ENCODE measurements at regions of chr19 and their contacts with region 1.

Region 1: GRCh38 chr19:35995048-35995993 is at the start of gene SDHAF1:
- DNase-seq: peak; percentile 91
- H3K4me3 Mint-ChIP-seq: peak within 1 kb of the TSS; percentile 93
- H3K27ac Mint-ChIP-seq: peak within 1 kb of the TSS; percentile 89
- H3K4me1 Mint-ChIP-seq: peaks cover 20% of the 10 kb centered on the region
- H3K27me3 Mint-ChIP-seq: no peaks in the 10 kb centered on the region
- total RNA-seq, gene SDHAF1: 20.0 and 20.8 TPM in 2 replicates

Region 2: DNA sequence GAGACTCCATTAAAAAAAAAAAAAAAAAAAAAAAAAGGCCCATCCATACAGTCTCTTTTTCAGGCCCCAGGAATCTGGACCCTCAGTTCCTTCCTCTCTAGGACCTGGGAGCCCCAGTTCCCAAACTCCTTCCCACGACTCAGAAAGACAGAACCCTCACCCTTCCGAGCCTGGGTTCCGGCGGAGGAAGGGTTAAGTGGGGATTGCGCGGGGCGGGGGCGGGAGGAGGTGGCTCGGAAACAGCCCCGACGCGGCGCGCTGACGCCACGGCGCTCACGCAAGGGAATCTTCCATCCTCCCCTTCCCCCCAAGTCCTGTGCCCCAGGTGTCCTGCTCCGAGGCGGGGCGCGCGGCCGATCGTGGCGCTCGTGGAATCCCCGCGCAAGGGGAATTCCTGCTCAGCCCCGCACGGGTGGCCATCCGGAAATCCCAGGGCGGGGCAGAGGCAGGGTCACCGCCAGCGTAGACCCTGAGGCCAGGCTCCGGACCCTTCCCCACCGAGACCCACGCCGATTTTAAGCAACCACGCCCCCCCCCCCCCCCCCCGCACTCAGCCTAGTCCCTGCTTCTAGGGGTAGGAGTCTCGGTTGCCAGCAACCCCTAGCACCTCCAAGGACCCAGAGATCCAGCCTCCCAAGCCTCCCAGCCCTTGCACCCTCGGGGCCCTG is 95.6 kb before region 1 on chr19:
- intact Hi-C with region 1: loop called (anchors 5 kb)
- DNase-seq: peak; percentile 82
- H3K4me3 Mint-ChIP-seq: peak overlapping the region; percentile 92
- H3K27ac Mint-ChIP-seq: peak overlapping the region; percentile 96
- H3K4me1 Mint-ChIP-seq: peaks cover 43% of the 10 kb centered on the region
- H3K27me3 Mint-ChIP-seq: no peaks in the 10 kb centered on the region

Region 3: DNA sequence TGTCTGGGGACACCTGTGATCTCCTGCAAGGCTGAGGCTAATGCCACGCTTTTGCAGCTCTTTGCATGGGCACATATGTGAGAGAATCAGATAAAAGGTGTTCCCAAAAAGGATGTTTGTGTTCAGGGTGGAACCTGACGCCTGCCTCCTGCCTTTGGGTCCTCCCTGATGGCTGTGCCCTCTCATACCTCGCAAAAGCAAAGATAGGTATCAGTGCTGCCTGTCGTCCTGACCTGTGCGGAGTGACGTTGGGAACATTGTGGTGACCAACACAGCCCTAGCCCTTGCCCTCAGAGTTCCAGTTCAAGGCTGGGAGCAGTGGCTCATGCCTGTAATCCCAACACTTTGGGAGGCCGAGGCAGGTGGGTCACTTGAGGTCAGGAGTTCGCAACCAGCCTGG is 45.2 kb before region 1 on chr19:
- intact Hi-C with region 1: loop called (anchors 5 kb)
- DNase-seq: no peak
- H3K4me3 Mint-ChIP-seq: no peak overlapping the region
- H3K27ac Mint-ChIP-seq: no peak overlapping the region
- H3K4me1 Mint-ChIP-seq: peaks cover 27% of the 10 kb centered on the region
- H3K27me3 Mint-ChIP-seq: no peaks in the 10 kb centered on the region

Region 4: DNA sequence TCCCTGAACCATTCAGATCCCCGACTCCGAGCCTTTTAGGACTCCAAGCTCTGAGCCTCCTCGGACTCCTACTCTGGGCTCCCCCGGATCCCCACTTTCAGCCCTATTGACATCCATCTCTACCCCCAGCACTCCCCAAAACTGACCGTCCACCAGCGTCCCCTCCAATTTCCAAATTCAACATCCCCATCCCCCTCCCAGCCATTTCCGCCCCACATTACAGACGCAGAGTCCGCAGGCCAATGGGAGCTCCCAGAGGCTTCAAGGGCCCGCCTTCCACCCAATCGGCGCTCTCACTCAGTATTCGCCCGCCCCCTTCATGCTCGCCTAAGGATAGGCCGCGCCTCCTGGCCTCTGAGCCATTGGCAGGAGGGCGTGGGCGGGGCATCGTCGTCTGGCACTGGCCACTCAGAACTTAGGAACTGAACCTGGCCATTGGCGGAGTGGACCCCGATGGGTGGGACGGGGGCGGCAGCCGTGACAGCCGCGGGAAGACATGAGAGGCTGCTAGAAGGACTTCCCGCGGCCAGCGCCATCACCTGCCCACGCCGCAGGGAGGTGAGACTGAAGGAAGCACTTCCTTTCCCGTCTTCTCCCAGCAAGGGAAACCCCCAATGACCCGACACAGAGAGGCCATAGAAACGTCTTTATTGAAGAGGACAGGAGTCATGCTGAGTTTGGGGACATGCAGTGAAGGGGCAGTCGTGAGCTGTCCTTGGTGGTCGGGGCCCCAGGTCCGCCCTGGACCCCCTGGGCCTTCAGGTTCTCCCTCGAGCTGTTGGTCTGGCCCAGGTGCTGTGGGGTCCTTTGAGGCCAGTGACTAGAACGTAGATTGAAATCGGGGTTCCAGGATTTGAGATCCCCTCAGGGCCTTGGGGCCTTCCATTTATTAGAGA is 19.0 kb after region 1 on chr19 and contains the start of gene ALKBH6:
- intact Hi-C with region 1: loop called (anchors 1 kb)
- DNase-seq: peak; percentile 99
- H3K4me3 Mint-ChIP-seq: peak within 1 kb of the TSS; percentile 93
- H3K27ac Mint-ChIP-seq: peak within 1 kb of the TSS; percentile 92
- H3K4me1 Mint-ChIP-seq: peaks cover 33% of the 10 kb centered on the region
- H3K27me3 Mint-ChIP-seq: no peaks in the 10 kb centered on the region
- total RNA-seq, gene ALKBH6: 49.9 and 54.3 TPM in 2 replicates

Region 5: DNA sequence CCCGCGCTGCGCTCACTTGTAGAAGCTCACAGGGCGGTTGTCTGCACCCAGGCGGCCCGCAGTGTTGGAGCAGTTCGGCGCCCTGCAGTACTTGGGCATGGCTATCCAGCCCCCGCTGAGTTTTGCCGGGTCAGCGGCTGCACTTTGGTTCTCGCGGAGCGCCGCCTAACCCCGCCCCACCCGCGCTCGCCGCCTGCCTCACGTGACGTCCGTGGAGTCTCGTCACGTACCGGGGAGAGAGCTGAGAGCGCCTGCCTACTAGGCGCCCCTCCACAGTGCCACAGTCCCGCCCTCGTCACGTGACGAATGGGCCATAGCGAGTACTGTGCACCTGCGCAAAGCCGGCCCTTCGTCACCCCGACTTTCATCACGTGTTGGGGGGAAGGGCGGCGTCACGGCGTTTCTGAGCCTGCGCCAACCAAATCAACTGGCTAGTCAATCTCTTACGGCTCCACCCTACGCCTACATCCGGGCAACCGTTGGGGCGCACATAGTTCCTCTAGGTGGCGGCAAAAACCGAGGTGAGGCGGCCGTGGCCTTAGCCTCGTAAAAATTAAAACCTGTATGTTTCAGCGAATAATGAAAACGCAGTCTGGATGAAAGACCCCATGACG is 58.9 kb after region 1 on chr19 and contains the start of gene THAP8:
- intact Hi-C with region 1: loop called (anchors 1 kb)
- DNase-seq: peak; percentile 100
- H3K4me3 Mint-ChIP-seq: peak within 1 kb of the TSS; percentile 98
- H3K27ac Mint-ChIP-seq: peak within 1 kb of the TSS; percentile 96
- H3K4me1 Mint-ChIP-seq: peaks cover 20% of the 10 kb centered on the region
- H3K27me3 Mint-ChIP-seq: no peaks in the 10 kb centered on the region
- total RNA-seq, gene THAP8: 1.8 and 2.2 TPM in 2 replicates